AG04450 (cell line): ENCODE measurements at regions of chr17 and their contacts with region 1.

Region 1: DNA sequence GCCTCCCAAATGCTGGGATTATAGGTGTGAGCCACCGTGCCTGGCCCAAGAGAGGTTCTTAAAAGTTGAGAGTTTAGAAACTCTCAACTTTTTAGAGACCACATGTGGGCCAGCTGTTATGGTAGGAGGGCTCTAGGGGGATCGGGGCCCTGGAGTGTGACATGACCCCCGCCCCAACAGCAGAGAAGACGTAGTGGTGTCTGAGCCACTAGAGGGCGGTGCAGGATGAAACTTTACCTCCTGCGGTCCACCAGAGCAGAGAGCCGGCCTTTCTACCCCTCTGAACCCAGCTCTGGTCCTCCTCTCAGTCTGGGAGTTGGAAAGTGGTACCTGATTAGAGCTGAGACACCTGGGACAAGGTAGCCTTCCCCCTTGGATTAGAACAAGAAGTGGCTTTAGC is 7.4 kb downstream of the CDK5RAP3 start:
- DNase-seq: peak; percentile 32
- H3K4me3 ChIP-seq: no peak overlapping the region
- H3K27ac ChIP-seq: no peak overlapping the region
- H3K27me3 ChIP-seq: no peaks in the 10 kb centered on the region
- CTCF ChIP-seq: peak; percentile 77

Region 2: DNA sequence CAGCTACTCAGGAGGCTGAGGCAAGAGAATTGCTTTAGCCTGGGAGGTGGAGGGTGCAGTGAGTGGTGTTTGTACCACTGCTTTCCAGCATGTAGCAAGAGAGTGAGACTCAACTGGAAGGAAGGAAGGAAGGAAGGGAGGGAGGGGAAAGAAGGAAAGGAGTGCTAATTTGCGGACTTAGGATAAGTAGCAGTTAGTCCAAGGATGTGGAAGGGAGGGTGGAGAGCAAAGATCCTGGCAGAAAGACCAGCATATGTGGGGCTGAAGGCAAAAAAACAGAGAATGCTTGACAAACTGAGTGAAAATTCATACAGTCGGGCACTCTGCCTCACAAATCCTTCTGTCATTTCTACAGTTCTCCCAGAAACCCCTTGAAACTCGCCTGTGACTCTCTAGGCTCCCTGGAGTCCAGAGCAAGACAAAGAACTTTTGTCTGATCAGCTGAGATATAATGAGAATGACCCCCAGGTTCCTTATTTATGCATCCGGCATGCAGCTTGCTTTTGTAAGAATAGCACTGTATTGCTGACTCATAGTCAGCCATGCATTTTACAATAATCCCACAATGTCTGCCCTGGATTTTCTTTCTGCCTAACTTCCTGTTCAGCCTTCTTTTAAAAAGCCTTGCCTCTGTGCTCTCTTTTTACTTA is 24.1 kb after region 1 on chr17:
- CTCF ChIA-PET with region 1: interaction called, 16 read pairs
- POLR2A ChIA-PET with region 1: no interaction called
- DNase-seq: peak; percentile 47
- H3K4me3 ChIP-seq: no peak overlapping the region
- H3K27ac ChIP-seq: peak overlapping the region; percentile 89
- H3K27me3 ChIP-seq: no peaks in the 10 kb centered on the region
- CTCF ChIP-seq: no peak

Region 3: GRCh38 chr17:48011405-48012150 is 33.3 kb after region 1 on chr17:
- CTCF ChIA-PET with region 1: interaction called, 185 read pairs
- POLR2A ChIA-PET with region 1: interaction called, 3 read pairs
- DNase-seq: no peak
- H3K4me3 ChIP-seq: peak overlapping the region; percentile 54
- H3K27ac ChIP-seq: no peak overlapping the region
- H3K27me3 ChIP-seq: peaks cover 9% of the 10 kb centered on the region
- CTCF ChIP-seq: peak; percentile 59